A549 (cell line): ENCODE measurements at regions of chr5 and their contacts with region 1.

Region 1: DNA sequence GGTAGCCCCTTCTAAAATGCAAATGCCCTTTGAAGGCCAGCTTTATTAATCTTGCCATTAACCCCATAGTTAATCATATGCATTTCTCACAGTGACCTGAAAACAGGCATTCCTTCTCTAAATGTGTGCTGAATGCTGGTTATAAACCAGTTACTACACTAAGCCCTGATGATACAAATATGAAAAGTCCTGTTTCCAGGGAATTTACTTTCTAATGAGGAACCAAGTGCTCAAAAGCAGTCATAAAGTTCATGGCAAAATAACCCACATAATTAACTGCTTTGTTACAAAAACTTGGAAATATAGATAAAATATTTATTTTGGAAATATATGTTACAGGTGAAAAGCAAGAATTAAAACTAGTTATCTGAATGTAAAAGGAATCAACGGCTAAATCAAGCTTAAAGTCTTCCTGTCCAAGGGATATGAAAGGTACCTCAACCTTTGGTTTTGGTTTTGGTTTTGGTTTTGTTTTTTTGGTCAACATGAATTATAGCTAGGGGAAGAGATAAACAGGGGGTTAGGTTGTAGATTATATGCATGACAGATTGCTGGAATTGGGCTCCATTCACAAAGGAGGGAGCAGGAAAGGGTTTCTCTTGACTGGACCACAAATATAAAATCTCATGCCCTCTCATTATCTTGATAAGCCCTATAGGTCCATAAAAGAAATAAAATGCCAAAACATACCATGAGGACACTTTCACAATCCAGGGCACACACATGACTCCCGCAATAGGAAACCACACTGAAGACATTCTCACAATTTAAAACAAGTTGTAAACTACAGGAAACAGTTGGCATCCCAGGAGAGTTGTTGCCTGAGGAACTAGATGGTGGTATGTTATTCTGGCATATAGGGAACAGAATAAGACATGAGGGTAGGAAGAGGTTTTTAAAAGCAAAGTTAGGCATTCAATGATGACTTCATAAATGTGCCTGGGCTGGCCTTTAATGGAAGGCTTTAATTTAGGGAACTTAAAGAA is 46.7 kb upstream of the MACIR start:
- DNase-seq: no peak
- ATAC-seq: no peak
- H3K4me3 ChIP-seq: no peak overlapping the region
- H3K27ac ChIP-seq: no peak overlapping the region
- H3K4me1 ChIP-seq: no peaks in the 10 kb centered on the region
- CTCF ChIP-seq: no peak
- EP300 ChIP-seq: no peak
- POLR2A ChIP-seq: no peak
- RAD21 ChIP-seq: no peak

Region 2: DNA sequence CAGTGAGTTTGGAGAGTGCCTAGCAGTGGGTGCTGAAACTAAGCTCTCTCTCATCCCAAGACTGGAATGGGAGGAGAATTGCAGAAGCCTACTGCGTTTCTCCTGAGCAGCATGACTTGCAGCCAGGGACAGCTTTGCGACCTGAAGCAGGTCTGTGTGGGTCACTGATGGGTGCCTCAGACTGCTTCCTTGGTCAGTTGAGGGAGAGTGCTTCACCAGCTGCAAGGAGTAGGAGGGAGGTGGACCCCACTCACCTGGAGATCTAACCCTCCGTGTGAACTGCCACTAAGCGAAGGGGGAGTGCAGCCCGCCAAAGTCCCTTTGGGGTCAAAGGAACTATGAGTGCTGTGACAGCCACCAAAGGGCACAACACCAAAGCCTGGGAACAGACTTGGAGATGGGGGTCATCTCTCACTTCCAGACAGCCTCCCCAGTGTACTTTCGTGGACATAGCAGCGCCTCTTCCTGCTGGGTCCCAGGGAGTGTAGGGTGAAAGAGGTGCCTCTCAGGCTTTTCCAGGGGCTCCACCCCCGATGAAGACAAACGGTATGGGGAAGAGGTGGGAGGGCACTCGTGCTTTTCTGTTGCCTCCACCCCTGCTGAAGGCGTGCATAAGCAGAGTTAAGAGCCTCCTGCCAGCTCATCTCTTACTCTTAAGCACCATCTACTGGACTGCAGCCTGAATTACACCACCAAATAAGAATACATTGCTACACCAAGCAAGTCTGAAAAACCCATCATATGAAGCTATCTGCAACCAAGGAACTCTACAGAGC is 12.4 kb after region 1 on chr5:
- CTCF ChIA-PET with region 1: interaction called, 18 read pairs
- POLR2A ChIA-PET with region 1: no interaction called
- DNase-seq: peak in 1 of 2 experiments; percentile 71
- ATAC-seq: peak; percentile 84 to 97
- H3K4me3 ChIP-seq: no peak overlapping the region
- H3K27ac ChIP-seq: no peak overlapping the region
- H3K4me1 ChIP-seq: no peaks in the 10 kb centered on the region
- CTCF ChIP-seq: peak; percentile 53
- EP300 ChIP-seq: no peak
- POLR2A ChIP-seq: no peak
- RAD21 ChIP-seq: peak; percentile 58 to 69

Region 3: GRCh38 chr5:103638979-103639378 is 427.1 kb after region 1 on chr5:
- CTCF ChIA-PET with region 1: no interaction called
- POLR2A ChIA-PET with region 1: no interaction called
- DNase-seq: no peak
- ATAC-seq: no peak
- H3K4me3 ChIP-seq: no peak overlapping the region
- H3K27ac ChIP-seq: no peak overlapping the region
- H3K4me1 ChIP-seq: no peaks in the 10 kb centered on the region
- CTCF ChIP-seq: no peak
- EP300 ChIP-seq: no peak
- POLR2A ChIP-seq: no peak
- RAD21 ChIP-seq: no peak